ENCODE measurements at regions of chr4 and their contacts with region 1.

Region 1: GRCh38 chr4:11471618-11472017 is 42.9 kb upstream of the HS3ST1 start:
- DNase-seq: peak; percentile 12 to 82 (median 75)
- ATAC-seq: peak; percentile 96
- H3K4me3 ChIP-seq: peak overlapping the region; percentile 66
- H3K4me3 Mint-ChIP-seq: peak overlapping the region; percentile 71 to 95 (median 90)
- H3K27ac ChIP-seq: peak overlapping the region; percentile 67
- H3K27ac Mint-ChIP-seq: peak overlapping the region; percentile 94 to 99 (median 96)
- H3K4me1 ChIP-seq: peaks cover 14 to 25% of the 10 kb centered on the region in 2 donors
- H3K4me1 Mint-ChIP-seq: peaks cover 28 to 61% (median 45%) of the 10 kb centered on the region in 7 donors
- H3K27me3 ChIP-seq: no peaks in the 10 kb centered on the region
- H3K27me3 Mint-ChIP-seq: peaks cover 0 to under 1% (median 0%) of the 10 kb centered on the region in 5 donors

Region 2: DNA sequence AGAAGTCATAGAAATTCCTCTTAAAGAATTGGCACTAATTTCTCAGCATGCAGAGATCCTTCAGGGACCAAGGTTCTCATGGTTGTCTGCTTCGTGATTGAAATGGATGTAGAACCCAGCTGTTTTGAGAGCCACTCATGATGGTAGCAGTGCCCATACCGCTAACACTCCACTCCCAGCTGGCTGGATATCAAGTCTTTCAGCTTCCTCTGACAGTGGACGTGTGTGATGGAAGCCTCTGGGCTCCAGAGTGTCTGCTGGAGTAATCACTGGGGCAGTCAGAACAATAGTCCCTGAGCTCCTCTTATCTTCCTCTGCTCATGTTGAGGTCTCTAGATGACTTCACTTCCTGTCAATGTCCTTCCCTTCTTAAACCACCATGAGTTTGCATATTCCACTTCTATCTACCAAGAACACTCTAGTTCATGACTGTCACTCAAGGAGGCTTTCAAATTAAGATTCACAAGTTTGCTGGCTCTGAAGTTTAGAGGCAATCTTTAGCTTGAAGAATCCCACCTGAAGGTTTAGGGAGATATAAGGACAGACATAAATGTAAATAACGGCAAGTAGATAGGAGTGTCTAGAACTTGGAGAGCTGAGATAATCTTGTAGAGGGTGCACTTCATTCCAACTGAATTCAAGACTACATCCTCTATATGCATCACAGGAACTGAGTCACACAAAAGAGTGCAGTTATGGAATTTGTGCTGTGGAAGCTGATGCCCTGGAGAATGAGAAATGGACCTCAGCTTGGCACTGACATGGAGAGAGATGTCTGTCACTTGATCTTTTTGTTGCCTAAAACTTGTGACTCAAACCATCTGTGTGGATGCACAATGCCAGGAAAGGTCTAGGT is 1290.5 kb before region 1 on chr4:
- CTCF ChIA-PET with region 1: no interaction called
- POLR2A ChIA-PET with region 1: no interaction called
- intact Hi-C with region 1: loop called in 1 of 2 experiments (anchors 5 kb)
- DNase-seq: peak in 6 of 9 donors; percentile 8 to 45 (median 27)
- ATAC-seq: peak; percentile 82
- H3K4me3 ChIP-seq: no peak overlapping the region
- H3K4me3 Mint-ChIP-seq: peak overlapping the region in 2 of 10 donors; percentile 9 to 53
- H3K27ac ChIP-seq: no peak overlapping the region
- H3K27ac Mint-ChIP-seq: peak overlapping the region in 2 of 9 donors; percentile 40 to 92
- H3K4me1 ChIP-seq: peaks cover 0 to 7% of the 10 kb centered on the region in 2 donors
- H3K4me1 Mint-ChIP-seq: peaks cover 8 to 41% (median 24%) of the 10 kb centered on the region in 7 donors
- H3K27me3 ChIP-seq: no peaks in the 10 kb centered on the region
- H3K27me3 Mint-ChIP-seq: no peaks in the 10 kb centered on the region

Region 3: GRCh38 chr4:11428899-11429698 is 42.5 kb before region 1 on chr4:
- CTCF ChIA-PET with region 1: no interaction called
- POLR2A ChIA-PET with region 1: interaction called, 6 read pairs
- intact Hi-C with region 1: loop called in 1 of 2 experiments (anchors 5 kb)
- DNase-seq: peak in 6 of 9 donors; percentile 8 to 52 (median 21)
- ATAC-seq: peak; percentile 83
- H3K4me3 ChIP-seq: peak overlapping the region; percentile 43
- H3K4me3 Mint-ChIP-seq: peak overlapping the region; percentile 69 to 84 (median 77)
- H3K27ac ChIP-seq: no peak overlapping the region
- H3K27ac Mint-ChIP-seq: no peak overlapping the region
- H3K4me1 ChIP-seq: peaks cover 0 to 8% of the 10 kb centered on the region in 2 donors
- H3K4me1 Mint-ChIP-seq: peaks cover 8 to 23% (median 14%) of the 10 kb centered on the region in 7 donors
- H3K27me3 ChIP-seq: no peaks in the 10 kb centered on the region
- H3K27me3 Mint-ChIP-seq: peaks cover 18 to 74% (median 32%) of the 10 kb centered on the region in 5 donors

Region 4: GRCh38 chr4:11487876-11488544 is 16.4 kb after region 1 on chr4:
- CTCF ChIA-PET with region 1: interaction called, 4 read pairs
- POLR2A ChIA-PET with region 1: interaction called, 6 read pairs
- intact Hi-C with region 1: loop called in 1 of 2 experiments (anchors 2 kb)
- DNase-seq: no peak
- ATAC-seq: peak; percentile 16
- H3K4me3 ChIP-seq: no peak overlapping the region
- H3K4me3 Mint-ChIP-seq: peak overlapping the region in 4 of 10 donors; percentile 13 to 30 (median 21)
- H3K27ac ChIP-seq: no peak overlapping the region
- H3K27ac Mint-ChIP-seq: peak overlapping the region in 8 of 9 donors; percentile 35 to 87 (median 72)
- H3K4me1 ChIP-seq: peaks cover 0 to 16% of the 10 kb centered on the region in 2 donors
- H3K4me1 Mint-ChIP-seq: peaks cover 12 to 43% (median 23%) of the 10 kb centered on the region in 7 donors
- H3K27me3 ChIP-seq: no peaks in the 10 kb centered on the region
- H3K27me3 Mint-ChIP-seq: no peaks in the 10 kb centered on the region

Measured in naive thymus-derived CD4-positive, alpha-beta T cell (primary cell).